AG04450 (cell line): ENCODE measurements at regions of chr1 and their contacts with region 1.

Region 1: GRCh38 chr1:92310185-92310597 is 11.3 kb downstream of the RPAP2 start:
- DNase-seq: no peak
- H3K4me3 ChIP-seq: no peak overlapping the region
- H3K27ac ChIP-seq: no peak overlapping the region
- H3K27me3 ChIP-seq: no peaks in the 10 kb centered on the region
- CTCF ChIP-seq: peak; percentile 64

Region 2: GRCh38 chr1:92219028-92219427 is 91.2 kb before region 1 on chr1:
- CTCF ChIA-PET with region 1: interaction called, 12 read pairs
- POLR2A ChIA-PET with region 1: no interaction called
- DNase-seq: no peak
- H3K4me3 ChIP-seq: no peak overlapping the region
- H3K27ac ChIP-seq: no peak overlapping the region
- H3K27me3 ChIP-seq: no peaks in the 10 kb centered on the region
- CTCF ChIP-seq: no peak

Region 3: DNA sequence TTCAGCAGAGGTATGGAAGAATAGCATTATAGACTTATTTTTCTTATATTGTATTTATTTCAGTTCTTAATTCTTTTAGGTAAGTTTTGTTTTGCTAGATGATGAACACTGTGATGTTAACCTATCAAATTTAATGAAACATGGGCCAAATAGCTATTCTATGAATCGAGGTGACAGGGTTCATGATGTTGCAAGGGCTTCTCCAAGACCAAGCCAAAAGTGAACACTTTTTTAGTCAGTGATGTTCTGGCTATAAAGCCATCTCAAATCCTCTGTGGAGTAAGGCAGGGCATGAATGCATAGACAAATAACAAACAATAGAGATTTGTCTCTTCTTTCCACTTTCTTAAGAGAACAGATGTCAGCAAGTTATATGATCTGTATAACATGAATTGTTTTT is 65.8 kb before region 1 on chr1:
- CTCF ChIA-PET with region 1: no interaction called
- POLR2A ChIA-PET with region 1: no interaction called
- DNase-seq: no peak
- H3K4me3 ChIP-seq: no peak overlapping the region
- H3K27ac ChIP-seq: no peak overlapping the region
- H3K27me3 ChIP-seq: no peaks in the 10 kb centered on the region
- CTCF ChIP-seq: no peak

Region 4: DNA sequence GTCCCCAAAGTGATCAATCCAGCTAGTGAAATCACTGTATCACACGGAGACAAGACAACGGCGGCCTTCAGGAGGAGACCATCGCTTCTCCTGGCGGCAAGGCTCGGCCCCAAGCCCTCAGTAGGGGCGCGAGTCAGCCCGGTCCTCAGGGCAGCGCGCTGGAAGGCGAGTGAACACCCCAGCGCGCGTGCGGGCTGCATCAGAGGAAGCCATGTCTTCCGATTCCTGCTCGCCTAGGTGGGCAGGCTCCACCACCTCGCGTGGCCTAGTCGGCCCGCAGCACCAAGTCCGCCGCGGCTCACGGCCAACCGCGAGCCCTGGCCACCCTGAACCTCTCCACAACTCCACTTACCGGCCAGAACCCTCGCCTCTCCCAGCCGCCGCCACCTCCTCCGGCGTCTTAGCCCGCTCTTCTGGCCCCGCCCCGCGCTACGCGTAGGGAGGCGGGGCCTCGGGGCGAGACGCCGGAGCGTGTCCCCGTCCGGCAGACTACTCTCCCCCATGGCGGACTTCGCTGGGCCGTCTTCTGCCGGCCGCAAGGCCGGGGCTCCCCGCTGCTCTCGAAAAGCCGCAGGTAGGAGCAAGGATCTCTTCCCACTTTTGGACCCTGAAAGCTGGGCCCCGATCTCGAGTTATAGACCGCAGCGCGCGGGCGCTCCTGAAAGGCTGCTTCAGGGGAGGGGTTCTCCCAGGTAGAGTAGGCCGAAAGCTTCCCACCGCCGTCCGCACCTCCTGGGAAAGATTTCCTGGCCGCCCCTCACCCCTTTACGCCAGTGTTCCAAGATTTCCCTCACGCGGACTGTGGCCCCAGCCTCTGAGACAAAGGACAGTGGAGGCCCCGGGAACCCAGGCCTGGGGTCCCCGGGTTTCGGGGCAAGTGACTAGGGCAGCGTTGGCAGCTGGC is 11.4 kb before region 1 on chr1 and contains the starts of genes GLMN and RPAP2:
- CTCF ChIA-PET with region 1: interaction called, 11 read pairs
- POLR2A ChIA-PET with region 1: no interaction called
- DNase-seq: peak; percentile 46
- H3K4me3 ChIP-seq: peak within 1 kb of the TSS; percentile 83
- H3K27ac ChIP-seq: peak within 1 kb of the TSS; percentile 85
- H3K27me3 ChIP-seq: no peaks in the 10 kb centered on the region
- CTCF ChIP-seq: peak; percentile 13; the same call in 1 of the 2 replicates
- polyA plus RNA-seq, gene GLMN: 6.0 and 10.1 TPM in 2 replicates
- polyA plus RNA-seq, gene RPAP2: 13.6 and 21.5 TPM in 2 replicates

Region 5: DNA sequence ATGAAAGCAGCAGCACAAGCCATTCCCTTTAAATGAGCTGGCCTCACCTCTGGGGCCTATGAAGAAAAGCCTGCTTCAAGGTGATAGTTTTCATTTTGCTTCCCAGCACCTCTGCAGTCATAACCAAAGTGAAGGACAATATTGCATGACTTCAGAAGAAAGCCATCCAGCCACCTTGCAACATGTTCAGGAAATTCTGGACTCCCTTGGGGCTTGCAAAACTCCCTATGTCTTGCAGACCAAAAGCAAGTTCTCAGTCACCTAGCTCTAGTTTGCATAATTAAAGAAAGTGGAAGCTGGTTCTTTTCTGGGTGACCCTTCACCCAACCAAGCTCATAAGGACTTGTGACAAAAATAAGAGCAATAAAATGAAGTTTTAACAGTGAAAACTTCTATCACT is 88.9 kb after region 1 on chr1:
- CTCF ChIA-PET with region 1: no interaction called
- POLR2A ChIA-PET with region 1: no interaction called
- DNase-seq: no peak
- H3K4me3 ChIP-seq: no peak overlapping the region
- H3K27ac ChIP-seq: no peak overlapping the region
- H3K27me3 ChIP-seq: no peaks in the 10 kb centered on the region
- CTCF ChIP-seq: no peak

Region 6: DNA sequence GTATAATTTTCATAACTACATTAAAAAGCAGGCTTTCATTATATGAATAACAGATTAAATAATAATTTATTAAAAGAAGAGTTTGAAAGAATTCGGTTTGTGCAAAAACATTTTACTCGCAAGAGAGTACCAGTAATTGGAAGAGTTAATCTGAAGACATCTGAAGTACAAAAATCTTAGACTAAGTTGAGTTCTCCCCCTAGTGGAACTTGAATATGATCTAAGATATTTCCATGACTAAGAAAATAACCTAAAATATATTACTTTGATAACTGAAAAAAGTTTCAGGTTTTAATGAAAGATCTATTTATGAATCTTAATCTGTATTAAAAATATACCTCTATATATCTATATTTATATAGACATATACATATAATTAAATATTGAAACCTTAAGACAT is 289.0 kb after region 1 on chr1:
- CTCF ChIA-PET with region 1: interaction called, 13 read pairs
- POLR2A ChIA-PET with region 1: no interaction called
- DNase-seq: peak; percentile 4
- H3K4me3 ChIP-seq: no peak overlapping the region
- H3K27ac ChIP-seq: no peak overlapping the region
- H3K27me3 ChIP-seq: no peaks in the 10 kb centered on the region
- CTCF ChIP-seq: peak; percentile 57

Region 7: GRCh38 chr1:92623187-92623778 is 313.1 kb after region 1 on chr1:
- CTCF ChIA-PET with region 1: interaction called, 18 read pairs
- POLR2A ChIA-PET with region 1: interaction called, 3 read pairs
- DNase-seq: no peak
- H3K4me3 ChIP-seq: no peak overlapping the region
- H3K27ac ChIP-seq: no peak overlapping the region
- H3K27me3 ChIP-seq: no peaks in the 10 kb centered on the region
- CTCF ChIP-seq: peak; percentile 40